WTC11 (cell line): ENCODE measurements at regions of chr6 and their contacts with region 1.

Region 1: GRCh38 chr6:51753635-51754034 is 333.8 kb downstream of the PKHD1 start:
- DNase-seq: peak; percentile 78
- ATAC-seq: peak; percentile 93
- H3K4me3 Mint-ChIP-seq: no peak overlapping the region
- H3K27ac Mint-ChIP-seq: no peak overlapping the region
- H3K4me1 Mint-ChIP-seq: no peaks in the 10 kb centered on the region
- H3K27me3 Mint-ChIP-seq: no peaks in the 10 kb centered on the region
- CTCF ChIP-seq: peak; percentile 70

Region 2: GRCh38 chr6:51569594-51569993 is 184.0 kb before region 1 on chr6:
- CTCF ChIA-PET with region 1: interaction called, 11 read pairs
- POLR2A ChIA-PET with region 1: no interaction called
- DNase-seq: no peak
- ATAC-seq: peak; percentile 99
- H3K4me3 Mint-ChIP-seq: no peak overlapping the region
- H3K27ac Mint-ChIP-seq: no peak overlapping the region
- H3K4me1 Mint-ChIP-seq: peaks cover 10% of the 10 kb centered on the region
- H3K27me3 Mint-ChIP-seq: no peaks in the 10 kb centered on the region
- CTCF ChIP-seq: no peak

Region 3: GRCh38 chr6:51768087-51768486 is 14.5 kb after region 1 on chr6:
- CTCF ChIA-PET with region 1: interaction called, 10 read pairs
- POLR2A ChIA-PET with region 1: no interaction called
- DNase-seq: no peak
- ATAC-seq: no peak
- H3K4me3 Mint-ChIP-seq: no peak overlapping the region
- H3K27ac Mint-ChIP-seq: no peak overlapping the region
- H3K4me1 Mint-ChIP-seq: no peaks in the 10 kb centered on the region
- H3K27me3 Mint-ChIP-seq: no peaks in the 10 kb centered on the region
- CTCF ChIP-seq: no peak